ENCODE measurements at regions of chr12 and their contacts with region 1.

Region 1: DNA sequence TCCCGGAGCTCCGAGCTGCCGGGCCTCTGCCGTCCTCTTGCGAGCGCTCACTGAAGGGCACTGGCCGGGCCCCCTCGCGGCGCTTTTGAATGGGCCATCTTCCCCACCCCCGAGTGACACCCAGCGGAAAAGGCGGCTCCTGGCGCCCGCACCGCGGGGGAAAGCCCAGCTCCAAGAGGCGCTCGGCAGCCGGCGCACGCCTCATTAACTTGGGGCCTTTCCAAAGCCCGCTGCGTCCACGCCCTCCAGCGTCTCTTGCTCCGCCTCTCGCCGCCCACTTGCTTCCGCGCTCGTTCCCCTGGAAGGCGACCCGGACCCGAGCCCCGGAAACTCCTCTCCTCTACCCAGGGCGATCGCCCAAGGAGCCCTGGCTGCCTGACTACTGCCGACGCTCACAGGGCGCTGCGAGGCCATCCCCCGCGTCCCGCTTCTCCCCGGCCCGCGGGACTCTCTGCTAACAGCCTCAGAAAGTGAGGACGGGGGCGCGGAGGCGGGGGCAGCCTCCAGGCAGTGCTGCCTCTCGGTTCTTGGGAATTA is at the start of gene PHLDA1:
- DNase-seq: peak; percentile 97 to 98 (median 98)
- ATAC-seq: peak; percentile 88 to 95 (median 92)
- H3K4me3 ChIP-seq: peak within 1 kb of the TSS; percentile 78 to 90 (median 82)
- H3K27ac ChIP-seq: peak within 1 kb of the TSS; percentile 98 to 99 (median 98)
- H3K4me1 ChIP-seq: peaks cover 0 to 10% (median 3%) of the 10 kb centered on the region in 4 donors
- H3K27me3 ChIP-seq: no peaks in the 10 kb centered on the region
- CTCF ChIP-seq: peak; percentile 48 to 68 (median 61)
- POLR2A ChIP-seq: peak; percentile 99
- total RNA-seq, gene PHLDA1: 1.7 to 22.4 (median 14.3) TPM

Region 2: GRCh38 chr12:75526655-75527511 is 504.7 kb before region 1 on chr12:
- intact Hi-C with region 1: loop called (anchors 10 kb)
- DNase-seq: no peak
- ATAC-seq: peak; percentile 62 to 81 (median 71)
- H3K4me3 ChIP-seq: no peak overlapping the region
- H3K27ac ChIP-seq: no peak overlapping the region
- H3K4me1 ChIP-seq: no peaks in the 10 kb centered on the region
- H3K27me3 ChIP-seq: no peaks in the 10 kb centered on the region
- CTCF ChIP-seq: peak; percentile 61 to 77 (median 73)
- POLR2A ChIP-seq: no peak

Region 3: DNA sequence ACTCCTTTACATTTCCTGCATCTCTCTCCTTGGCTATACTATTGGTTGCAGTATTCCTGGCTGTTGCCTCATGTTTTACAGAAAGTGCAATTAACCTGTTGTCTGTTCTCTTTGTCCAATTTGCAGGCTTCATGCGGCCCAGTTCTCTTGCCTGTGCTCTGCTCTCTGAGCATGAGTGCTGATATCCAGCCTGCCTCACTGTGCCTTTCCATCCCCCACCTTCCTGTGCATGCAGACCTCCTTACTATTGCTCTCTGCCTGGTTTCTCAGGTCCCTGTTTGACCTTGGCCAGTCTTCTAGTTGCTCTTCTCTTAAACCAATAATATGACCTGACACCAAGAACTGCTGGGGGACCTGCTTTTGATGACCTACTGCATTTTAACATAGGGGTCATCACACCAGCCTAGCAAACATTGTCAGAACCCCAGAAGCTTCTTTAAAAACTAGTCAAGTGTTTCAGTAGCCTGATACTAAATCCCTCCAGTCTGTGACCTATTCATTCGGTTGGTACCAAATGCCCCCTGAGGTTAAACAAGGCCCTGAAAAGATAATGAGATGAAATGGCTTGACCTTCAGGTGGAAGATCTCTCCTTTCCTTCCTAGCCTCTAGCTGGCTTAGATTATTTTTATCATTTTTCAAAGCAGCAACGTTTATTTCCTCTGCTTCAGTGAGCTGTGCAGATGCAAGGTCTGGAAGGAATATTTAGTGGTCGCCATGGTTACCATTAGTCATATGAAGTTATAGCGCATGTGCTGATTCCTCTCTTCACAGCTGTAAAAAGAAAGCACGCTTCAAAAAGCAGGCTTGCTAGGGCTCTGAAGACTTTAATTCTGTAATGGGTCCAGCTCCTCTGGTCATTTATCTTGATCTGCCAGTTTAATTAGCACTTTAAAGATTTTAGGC is 216.5 kb before region 1 on chr12:
- intact Hi-C with region 1: loop called in 1 of 2 experiments (anchors 10 kb)
- DNase-seq: no peak
- ATAC-seq: peak; percentile 33 to 63 (median 55)
- H3K4me3 ChIP-seq: no peak overlapping the region
- H3K27ac ChIP-seq: no peak overlapping the region
- H3K4me1 ChIP-seq: no peaks in the 10 kb centered on the region
- H3K27me3 ChIP-seq: no peaks in the 10 kb centered on the region
- CTCF ChIP-seq: no peak
- POLR2A ChIP-seq: no peak